ENCODE measurements at regions of chr1 and their contacts with region 1.

Region 1: GRCh38 chr1:41673378-41673777 is 188.9 kb upstream of the EDN2 start:
- DNase-seq: peak; percentile 24 to 83 (median 45)
- ATAC-seq: peak; percentile 89
- H3K4me3 ChIP-seq: peak overlapping the region; percentile 29
- H3K4me3 Mint-ChIP-seq: peak overlapping the region; percentile 80
- H3K27ac ChIP-seq: peak overlapping the region; percentile 66 to 78
- H3K27ac Mint-ChIP-seq: peak overlapping the region; percentile 80
- H3K4me1 ChIP-seq: peaks cover 77% of the 10 kb centered on the region
- H3K4me1 Mint-ChIP-seq: peaks cover 74% of the 10 kb centered on the region
- H3K27me3 ChIP-seq: no peaks in the 10 kb centered on the region
- H3K27me3 Mint-ChIP-seq: no peaks in the 10 kb centered on the region
- CTCF ChIP-seq: no peak

Region 2: GRCh38 chr1:41662061-41662764 is 11.2 kb before region 1 on chr1:
- CTCF ChIA-PET with region 1: no interaction called
- POLR2A ChIA-PET with region 1: interaction called, 65 read pairs
- intact Hi-C with region 1: no loop called
- DNase-seq: peak; percentile 39 to 90 (median 60)
- ATAC-seq: peak; percentile 78
- H3K4me3 ChIP-seq: peak overlapping the region; percentile 69
- H3K4me3 Mint-ChIP-seq: peak overlapping the region; percentile 58
- H3K27ac ChIP-seq: peak overlapping the region; percentile 55 to 63
- H3K27ac Mint-ChIP-seq: no peak overlapping the region
- H3K4me1 ChIP-seq: peaks cover 91% of the 10 kb centered on the region
- H3K4me1 Mint-ChIP-seq: peaks cover 84% of the 10 kb centered on the region
- H3K27me3 ChIP-seq: no peaks in the 10 kb centered on the region
- H3K27me3 Mint-ChIP-seq: no peaks in the 10 kb centered on the region
- CTCF ChIP-seq: no peak

Region 3: DNA sequence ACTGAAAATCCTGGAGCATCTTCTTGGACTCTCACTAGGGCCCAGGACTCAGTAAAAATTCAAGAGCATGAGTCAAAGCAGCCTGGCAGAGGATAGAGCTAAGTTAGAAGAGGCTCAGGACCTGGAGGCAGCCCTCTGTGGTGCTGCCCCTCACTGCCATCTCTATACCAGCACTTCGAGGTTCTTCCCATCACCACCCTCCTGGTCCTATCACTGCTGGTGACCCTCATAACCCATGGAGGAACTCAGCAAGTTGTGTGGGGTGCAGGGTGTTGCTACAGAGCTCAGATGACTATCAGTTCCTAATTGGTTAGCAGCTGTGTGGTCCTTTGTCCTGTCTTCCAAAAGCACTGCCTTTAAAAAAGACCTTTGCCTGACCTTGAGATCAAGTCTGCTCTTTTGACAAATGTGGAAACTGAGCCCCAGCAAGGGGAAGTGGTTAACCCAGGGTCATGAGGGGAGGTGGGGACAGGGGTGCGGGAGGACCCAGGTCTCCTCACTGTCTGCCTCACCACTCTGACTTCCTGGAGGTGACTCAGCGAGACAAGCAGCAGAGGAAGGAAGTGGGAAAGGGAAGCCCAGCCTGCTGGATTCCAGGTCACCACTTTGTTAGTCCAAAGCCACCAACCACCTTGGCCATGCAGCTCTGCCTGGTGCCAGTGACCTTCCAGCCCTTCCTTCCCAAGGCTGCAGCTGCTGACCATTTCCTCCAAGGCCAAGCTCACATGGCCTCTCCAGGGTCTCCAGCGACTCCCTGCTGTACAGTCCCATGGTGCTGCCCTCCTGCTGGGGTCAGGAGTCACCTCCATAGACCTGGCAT is 10.5 kb after region 1 on chr1:
- CTCF ChIA-PET with region 1: no interaction called
- POLR2A ChIA-PET with region 1: interaction called, 29 read pairs
- intact Hi-C with region 1: no loop called
- DNase-seq: peak in 6 of 14 experiments; percentile 16 to 69 (median 56)
- ATAC-seq: peak; percentile 56
- H3K4me3 ChIP-seq: no peak overlapping the region
- H3K4me3 Mint-ChIP-seq: peak overlapping the region; percentile 25
- H3K27ac ChIP-seq: no peak overlapping the region
- H3K27ac Mint-ChIP-seq: peak overlapping the region; percentile 31
- H3K4me1 ChIP-seq: peaks cover 53% of the 10 kb centered on the region
- H3K4me1 Mint-ChIP-seq: peaks cover 46% of the 10 kb centered on the region
- H3K27me3 ChIP-seq: no peaks in the 10 kb centered on the region
- H3K27me3 Mint-ChIP-seq: no peaks in the 10 kb centered on the region
- CTCF ChIP-seq: no peak

Region 4: GRCh38 chr1:41698916-41699860 is 25.8 kb after region 1 on chr1:
- CTCF ChIA-PET with region 1: no interaction called
- POLR2A ChIA-PET with region 1: no interaction called
- intact Hi-C with region 1: no loop called
- DNase-seq: peak in 2 of 14 experiments; percentile 43 to 48
- ATAC-seq: no peak
- H3K4me3 ChIP-seq: no peak overlapping the region
- H3K4me3 Mint-ChIP-seq: no peak overlapping the region
- H3K27ac ChIP-seq: no peak overlapping the region
- H3K27ac Mint-ChIP-seq: no peak overlapping the region
- H3K4me1 ChIP-seq: peaks cover 12% of the 10 kb centered on the region
- H3K4me1 Mint-ChIP-seq: no peaks in the 10 kb centered on the region
- H3K27me3 ChIP-seq: no peaks in the 10 kb centered on the region
- H3K27me3 Mint-ChIP-seq: no peaks in the 10 kb centered on the region
- CTCF ChIP-seq: no peak

Region 5: DNA sequence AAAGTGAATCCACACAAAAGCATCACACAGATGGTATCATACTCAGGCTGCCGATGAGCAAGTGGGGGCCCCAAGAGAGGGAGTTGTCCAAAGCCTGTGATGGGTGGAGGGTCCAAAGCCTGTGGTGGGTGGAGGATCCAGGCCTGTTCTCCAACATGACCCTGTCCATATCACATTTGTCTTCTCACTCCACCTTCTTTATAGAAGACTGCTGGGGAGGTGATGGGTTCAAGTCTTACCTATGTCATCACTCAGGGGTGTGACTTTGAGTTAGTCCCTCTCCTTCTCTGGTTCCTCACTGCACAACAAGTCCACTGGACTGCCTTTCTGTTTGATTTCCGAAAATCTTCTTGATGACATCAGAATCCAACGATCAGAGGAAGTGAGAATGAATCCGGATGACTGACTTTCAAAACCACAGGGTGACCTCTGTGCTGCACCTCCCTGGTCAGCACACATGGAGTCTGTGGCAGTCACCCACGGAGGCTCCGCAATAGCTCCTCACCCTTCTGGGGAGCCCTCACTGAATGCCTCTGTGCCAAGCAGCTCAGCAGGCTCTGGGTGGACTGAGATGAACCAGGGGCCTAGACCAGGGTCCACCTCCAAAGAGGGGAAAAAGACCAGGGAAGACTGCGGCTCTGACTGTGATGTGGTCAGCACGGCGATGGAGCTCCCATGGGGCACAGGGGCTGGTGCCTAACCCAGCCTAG is 78.6 kb after region 1 on chr1:
- CTCF ChIA-PET with region 1: no interaction called
- POLR2A ChIA-PET with region 1: interaction called, 8 read pairs
- intact Hi-C with region 1: loop called in 1 of 2 experiments (anchors 5 kb)
- DNase-seq: peak in 3 of 14 experiments; percentile 33 to 70 (median 61)
- ATAC-seq: no peak
- H3K4me3 ChIP-seq: no peak overlapping the region
- H3K4me3 Mint-ChIP-seq: no peak overlapping the region
- H3K27ac ChIP-seq: no peak overlapping the region
- H3K27ac Mint-ChIP-seq: no peak overlapping the region
- H3K4me1 ChIP-seq: peaks cover 46% of the 10 kb centered on the region
- H3K4me1 Mint-ChIP-seq: peaks cover 46% of the 10 kb centered on the region
- H3K27me3 ChIP-seq: no peaks in the 10 kb centered on the region
- H3K27me3 Mint-ChIP-seq: no peaks in the 10 kb centered on the region
- CTCF ChIP-seq: no peak

Region 6: DNA sequence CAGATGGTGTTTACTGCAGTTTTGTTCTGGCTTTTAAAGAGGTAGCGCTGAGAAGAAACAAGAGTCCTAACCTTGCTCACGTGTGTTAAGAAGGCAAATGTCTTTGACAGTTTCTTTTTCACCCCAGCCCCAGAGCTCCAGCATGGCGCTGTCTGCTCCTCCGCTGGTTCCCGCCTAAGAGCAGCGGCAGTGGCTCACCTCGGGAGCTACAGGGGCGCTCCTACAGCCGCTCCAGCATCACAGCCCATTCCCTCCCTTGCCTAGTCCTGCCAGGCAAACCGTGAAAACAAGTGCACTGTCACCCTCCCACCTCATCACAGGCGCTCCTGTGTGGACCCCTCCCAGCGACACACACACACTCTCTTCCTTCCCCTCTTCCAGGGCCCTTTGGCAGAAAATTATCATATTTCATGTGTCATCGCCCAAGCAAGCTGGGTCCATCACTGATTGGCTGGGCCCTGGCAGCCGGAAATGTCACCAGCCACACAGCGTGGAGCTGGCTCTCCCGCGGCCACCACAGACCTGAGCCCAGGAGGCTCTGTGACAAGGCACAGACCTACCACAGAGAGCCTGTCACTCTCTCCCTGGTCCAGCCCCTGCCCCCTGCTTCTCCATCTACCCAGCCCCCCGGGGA is 246.5 kb after region 1 on chr1:
- CTCF ChIA-PET with region 1: no interaction called
- POLR2A ChIA-PET with region 1: interaction called, 3 read pairs
- intact Hi-C with region 1: loop called in 1 of 2 experiments (anchors 5 kb)
- DNase-seq: peak; percentile 56 to 94 (median 72)
- ATAC-seq: peak; percentile 83
- H3K4me3 ChIP-seq: peak overlapping the region; percentile 62
- H3K4me3 Mint-ChIP-seq: peak overlapping the region; percentile 84
- H3K27ac ChIP-seq: peak overlapping the region; percentile 57 to 60
- H3K27ac Mint-ChIP-seq: peak overlapping the region; percentile 95
- H3K4me1 ChIP-seq: peaks cover 51% of the 10 kb centered on the region
- H3K4me1 Mint-ChIP-seq: peaks cover 63% of the 10 kb centered on the region
- H3K27me3 ChIP-seq: no peaks in the 10 kb centered on the region
- H3K27me3 Mint-ChIP-seq: no peaks in the 10 kb centered on the region
- CTCF ChIP-seq: no peak

Region 7: DNA sequence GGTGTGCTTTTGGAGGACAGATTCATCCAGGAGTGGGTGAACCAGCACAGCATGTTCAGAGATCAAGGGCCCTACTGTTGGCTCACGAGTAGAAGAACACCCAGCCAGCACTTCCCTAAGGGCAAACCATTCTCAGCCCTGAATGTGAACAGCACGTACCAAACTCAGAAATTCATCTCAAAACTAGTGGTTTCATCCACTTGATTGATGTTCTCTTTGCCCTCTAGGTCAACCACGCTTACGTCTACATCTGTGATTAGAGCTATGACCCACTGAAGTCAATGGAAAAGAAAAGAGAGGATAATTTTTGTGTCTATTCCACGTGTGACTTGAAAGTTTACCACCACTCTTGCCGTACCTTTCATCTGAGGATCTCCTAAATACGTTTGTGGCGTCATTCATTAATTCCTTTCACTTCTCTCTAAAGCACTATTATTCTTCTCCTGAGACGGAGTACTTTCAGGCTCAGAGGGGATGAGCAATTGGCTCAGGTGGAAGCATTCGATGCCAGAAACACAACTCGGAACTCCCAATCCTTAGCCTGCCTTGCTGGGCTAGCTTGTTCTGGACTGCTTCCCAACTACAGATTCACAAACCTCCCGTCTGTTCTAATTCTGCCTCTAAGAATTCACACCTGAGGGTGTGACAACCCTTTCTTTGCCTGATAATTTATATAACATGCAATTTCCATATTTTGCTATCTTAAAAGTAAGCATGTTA is 302.6 kb after region 1 on chr1:
- CTCF ChIA-PET with region 1: no interaction called
- POLR2A ChIA-PET with region 1: no interaction called
- intact Hi-C with region 1: no loop called
- DNase-seq: no peak
- ATAC-seq: no peak
- H3K4me3 ChIP-seq: no peak overlapping the region
- H3K4me3 Mint-ChIP-seq: no peak overlapping the region
- H3K27ac ChIP-seq: no peak overlapping the region
- H3K27ac Mint-ChIP-seq: no peak overlapping the region
- H3K4me1 ChIP-seq: peaks cover 4% of the 10 kb centered on the region
- H3K4me1 Mint-ChIP-seq: peaks cover 18% of the 10 kb centered on the region
- H3K27me3 ChIP-seq: no peaks in the 10 kb centered on the region
- H3K27me3 Mint-ChIP-seq: no peaks in the 10 kb centered on the region
- CTCF ChIP-seq: no peak